AG04449 (cell line): ENCODE measurements at regions of chr11 and their contacts with region 1.

Region 1: GRCh38 chr11:65512306-65512705 is 12.6 kb upstream of the SCYL1 start:
- DNase-seq: no peak
- H3K4me3 ChIP-seq: no peak overlapping the region
- CTCF ChIP-seq: no peak

Region 2: DNA sequence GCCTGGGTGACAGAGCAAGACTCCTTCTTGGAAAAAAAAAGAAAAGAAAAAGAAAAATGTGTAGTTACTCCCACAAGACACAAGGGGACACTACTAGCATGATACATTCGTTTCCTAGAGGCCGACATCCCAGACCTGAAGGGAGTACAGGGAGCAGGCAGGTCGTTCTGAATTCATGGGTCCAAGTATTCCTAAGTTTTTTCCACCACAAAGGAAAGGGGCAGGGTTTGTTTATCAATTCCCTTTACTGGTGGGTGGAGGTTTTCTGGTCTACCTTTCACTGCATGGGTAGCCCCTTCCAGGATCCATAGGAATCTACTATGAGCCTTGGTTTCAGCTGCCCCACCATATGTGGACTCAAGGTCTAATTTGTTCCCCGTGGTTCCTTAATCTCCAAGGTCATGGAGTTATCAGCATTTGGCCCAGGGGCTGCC is 145.9 kb before region 1 on chr11:
- CTCF ChIA-PET with region 1: interaction called, 14 read pairs
- POLR2A ChIA-PET with region 1: interaction called, 33 read pairs
- DNase-seq: no peak
- H3K4me3 ChIP-seq: no peak overlapping the region
- CTCF ChIP-seq: peak; percentile 67

Region 3: GRCh38 chr11:65382033-65382807 is 130.1 kb before region 1 on chr11 and contains the start of gene SLC25A45:
- CTCF ChIA-PET with region 1: interaction called, 43 read pairs
- POLR2A ChIA-PET with region 1: interaction called, 7 read pairs
- DNase-seq: peak; percentile 95
- H3K4me3 ChIP-seq: peak within 1 kb of the TSS; percentile 53
- CTCF ChIP-seq: peak; percentile 88

Region 4: DNA sequence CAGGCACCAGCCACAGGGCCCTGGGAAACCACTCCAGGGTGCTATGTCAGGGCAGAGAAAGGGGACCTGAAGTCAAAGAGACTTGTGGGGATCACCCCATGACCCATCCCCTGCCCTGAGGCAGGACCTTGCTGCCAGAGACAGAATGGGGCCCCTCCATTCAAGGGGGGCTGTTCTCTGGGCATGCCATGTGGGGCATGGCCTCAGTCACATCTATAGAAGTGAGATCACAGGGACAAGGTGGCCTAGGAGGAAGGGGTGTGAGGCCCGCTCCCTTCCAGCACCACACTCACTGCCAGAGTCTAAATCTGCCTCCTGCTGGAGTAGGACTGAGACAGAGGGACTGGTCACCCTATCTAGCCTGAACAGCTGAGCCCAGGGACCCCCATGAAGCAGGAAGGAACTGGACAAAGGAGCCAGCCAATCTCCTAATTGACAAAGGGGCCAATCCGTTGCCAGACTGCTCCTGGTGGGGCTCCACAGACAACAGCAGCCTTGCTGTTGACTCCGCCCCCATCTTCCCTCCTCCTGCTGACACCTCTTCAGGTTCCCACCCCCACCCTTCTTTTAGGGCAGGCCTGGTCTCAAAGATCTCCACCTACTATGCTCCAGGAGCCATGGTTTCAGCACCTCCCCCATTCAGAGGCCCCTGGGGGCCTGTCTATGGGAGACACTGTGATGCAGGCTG is 63.7 kb before region 1 on chr11:
- CTCF ChIA-PET with region 1: interaction called, 17 read pairs
- POLR2A ChIA-PET with region 1: interaction called, 142 read pairs
- DNase-seq: no peak
- H3K4me3 ChIP-seq: no peak overlapping the region
- CTCF ChIP-seq: no peak

Region 5: DNA sequence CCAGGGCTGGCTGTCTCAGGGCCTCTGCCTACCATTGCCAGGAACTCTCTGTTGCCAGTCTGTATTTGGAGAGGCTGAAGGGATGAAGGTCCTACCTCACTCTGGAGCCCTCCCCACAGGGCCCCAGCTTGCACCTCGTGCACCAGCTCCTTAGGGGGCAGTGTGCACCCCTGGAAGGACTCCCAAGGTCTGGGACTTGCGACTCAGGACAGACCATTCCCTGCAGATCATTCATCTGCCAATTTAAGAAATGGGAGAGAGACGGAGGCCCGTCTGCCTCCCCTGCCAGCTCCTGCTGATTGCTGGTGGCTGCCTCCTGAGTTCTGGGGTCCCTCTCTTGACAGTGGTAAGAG is 40.9 kb before region 1 on chr11:
- CTCF ChIA-PET with region 1: interaction called, 40 read pairs
- POLR2A ChIA-PET with region 1: interaction called, 1,229 read pairs
- DNase-seq: no peak
- H3K4me3 ChIP-seq: peak overlapping the region; percentile 42
- CTCF ChIP-seq: peak; percentile 73

Region 6: DNA sequence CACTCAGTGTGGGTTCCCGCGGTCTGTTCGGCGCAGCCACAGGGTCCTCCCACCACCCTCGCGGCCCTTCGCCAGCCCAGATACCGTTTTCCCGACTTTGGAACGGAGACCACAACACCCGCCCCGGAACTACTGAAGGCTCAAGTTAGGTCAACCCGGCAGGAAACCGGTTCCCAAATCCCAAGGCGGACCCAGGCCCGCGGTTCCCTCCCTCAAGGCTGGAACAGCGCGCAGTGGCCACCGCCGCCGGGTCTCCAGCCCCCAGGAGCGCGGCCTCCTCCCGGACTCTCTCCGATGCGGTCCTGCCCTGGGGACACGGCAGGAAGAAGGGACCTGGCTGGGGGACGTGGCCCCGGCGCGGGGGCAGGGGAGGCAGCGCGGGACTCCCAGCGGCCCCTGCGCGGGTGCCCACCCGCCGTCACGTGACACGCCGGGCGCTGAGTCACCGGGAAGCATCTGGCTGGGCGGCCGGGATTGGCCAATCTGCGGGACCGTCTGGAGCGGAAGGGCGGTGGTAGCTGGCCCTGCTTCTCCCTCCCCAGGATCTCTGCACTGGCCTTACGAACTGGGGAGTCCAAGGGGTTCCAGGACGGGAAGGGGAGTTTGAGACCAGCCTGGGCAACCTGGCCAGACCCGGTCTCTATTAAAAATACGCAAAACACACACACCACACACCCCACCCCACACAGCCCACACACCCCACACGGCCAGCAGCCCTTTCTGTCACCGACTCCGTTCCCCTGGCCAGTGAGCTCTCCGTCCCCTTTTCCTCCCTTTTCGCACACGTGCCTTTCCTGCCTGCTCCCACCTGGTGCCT is 34.9 kb before region 1 on chr11:
- CTCF ChIA-PET with region 1: interaction called, 40 read pairs
- POLR2A ChIA-PET with region 1: interaction called, 1,229 read pairs
- DNase-seq: no peak
- H3K4me3 ChIP-seq: peak overlapping the region; percentile 78
- CTCF ChIP-seq: no peak